ENCODE measurements at regions of chr18 and their contacts with region 1.

Region 1: GRCh38 chr18:65057439-65058083 is 693.3 kb upstream of the CDH7 start:
- DNase-seq: no peak
- ATAC-seq: peak in 6 of 8 donors; percentile 11 to 67 (median 55)
- H3K4me3 ChIP-seq: peak overlapping the region in 6 of 10 donors; percentile 5 to 44 (median 26)
- H3K27ac ChIP-seq: peak overlapping the region in 4 of 10 donors; percentile 11 to 48 (median 30)
- H3K4me1 ChIP-seq: peaks cover 0 to 8% (median 0%) of the 10 kb centered on the region in 9 donors
- H3K27me3 ChIP-seq: no peaks in the 10 kb centered on the region
- CTCF ChIP-seq: no peak

Region 2: DNA sequence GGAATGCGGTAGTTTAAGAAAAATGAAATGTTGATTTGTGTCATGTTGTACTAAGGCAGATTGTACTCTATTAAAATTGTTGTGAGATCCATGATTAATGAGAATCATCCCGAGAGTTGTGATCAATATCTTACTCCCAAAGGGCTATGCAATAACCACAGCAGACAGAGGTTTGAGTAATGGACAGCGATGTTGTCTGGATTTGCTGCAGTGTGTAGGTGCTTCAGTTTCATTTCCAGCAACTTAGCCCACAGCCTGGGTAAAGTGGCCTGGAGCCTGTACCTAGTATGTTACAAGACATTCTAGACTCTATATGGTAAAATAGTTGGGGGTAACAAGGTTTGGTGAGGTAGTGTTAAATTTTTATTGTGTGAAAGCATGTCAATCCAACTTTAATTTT is 101.1 kb before region 1 on chr18:
- intact Hi-C with region 1: no loop called
- DNase-seq: no peak
- ATAC-seq: no peak
- H3K4me3 ChIP-seq: no peak overlapping the region
- H3K27ac ChIP-seq: no peak overlapping the region
- H3K4me1 ChIP-seq: no peaks in the 10 kb centered on the region
- H3K27me3 ChIP-seq: no peaks in the 10 kb centered on the region
- CTCF ChIP-seq: no peak

Region 3: GRCh38 chr18:64966667-64967066 is 90.9 kb before region 1 on chr18:
- intact Hi-C with region 1: no loop called
- DNase-seq: peak; percentile 13 to 33
- ATAC-seq: peak in 6 of 8 donors; percentile 47 to 89 (median 80)
- H3K4me3 ChIP-seq: no peak overlapping the region
- H3K27ac ChIP-seq: no peak overlapping the region
- H3K4me1 ChIP-seq: peaks cover 0 to 16% (median 0%) of the 10 kb centered on the region in 9 donors
- H3K27me3 ChIP-seq: no peaks in the 10 kb centered on the region
- CTCF ChIP-seq: no peak

Region 4: DNA sequence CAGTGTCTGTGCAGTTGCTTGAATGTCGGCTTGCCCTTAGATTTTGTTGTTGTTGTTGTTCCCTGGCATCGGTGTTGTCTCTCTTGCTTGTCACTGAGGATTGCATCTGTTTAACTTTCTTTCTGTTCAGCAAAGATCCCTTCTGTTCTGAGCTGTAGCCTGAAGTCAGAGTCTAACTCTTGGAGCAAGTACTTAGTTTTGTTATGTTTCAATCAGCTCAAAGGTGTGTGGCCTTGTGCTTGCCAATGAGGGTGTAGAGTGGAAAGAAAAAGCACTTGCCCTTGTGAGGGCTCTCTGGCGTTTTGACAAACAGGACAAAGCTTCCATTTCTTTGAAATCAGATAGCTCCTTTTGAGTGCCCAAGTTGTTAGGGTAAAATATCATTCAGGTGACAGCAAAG is 63.9 kb before region 1 on chr18:
- intact Hi-C with region 1: loop called in 1 of 10 experiments (anchors 10 kb)
- DNase-seq: no peak
- ATAC-seq: peak in 7 of 8 donors; percentile 35 to 63 (median 48)
- H3K4me3 ChIP-seq: no peak overlapping the region
- H3K27ac ChIP-seq: peak overlapping the region in 8 of 10 donors; percentile 23 to 62 (median 50)
- H3K4me1 ChIP-seq: peaks cover 0 to 16% (median 0%) of the 10 kb centered on the region in 9 donors
- H3K27me3 ChIP-seq: no peaks in the 10 kb centered on the region
- CTCF ChIP-seq: no peak

Measured in heart right ventricle (tissue), 16 donors.